ENCODE measurements at regions of chr9 and their contacts with region 1.

Region 1: DNA sequence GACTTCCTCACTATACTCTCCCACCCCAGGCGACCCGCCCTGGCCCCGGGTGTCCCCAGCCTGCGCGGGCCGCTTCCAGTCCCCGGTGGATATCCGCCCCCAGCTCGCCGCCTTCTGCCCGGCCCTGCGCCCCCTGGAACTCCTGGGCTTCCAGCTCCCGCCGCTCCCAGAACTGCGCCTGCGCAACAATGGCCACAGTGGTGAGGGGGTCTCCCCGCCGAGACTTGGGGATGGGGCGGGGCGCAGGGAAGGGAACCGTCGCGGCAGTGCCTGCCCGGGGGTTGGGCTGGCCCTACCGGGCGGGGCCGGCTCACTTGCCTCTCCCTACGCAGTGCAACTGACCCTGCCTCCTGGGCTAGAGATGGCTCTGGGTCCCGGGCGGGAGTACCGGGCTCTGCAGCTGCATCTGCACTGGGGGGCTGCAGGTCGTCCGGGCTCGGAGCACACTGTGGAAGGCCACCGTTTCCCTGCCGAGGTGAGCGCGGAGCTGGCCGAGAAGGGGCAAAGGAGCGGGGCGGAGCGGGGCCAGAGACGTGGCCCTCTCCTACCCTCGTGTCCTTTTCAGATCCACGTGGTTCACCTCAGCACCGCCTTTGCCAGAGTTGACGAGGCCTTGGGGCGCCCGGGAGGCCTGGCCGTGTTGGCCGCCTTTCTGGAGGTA is 2.1 kb downstream of the CA9 start:
- DNase-seq: peak; percentile 42
- H3K4me3 ChIP-seq: peak overlapping the region; percentile 34 to 43 (median 40)
- H3K27ac ChIP-seq: no peak overlapping the region
- H3K4me1 ChIP-seq: peaks cover 5% of the 10 kb centered on the region
- H3K27me3 ChIP-seq: peaks cover 3 to 11% of the 10 kb centered on the region in 2 experiments
- CTCF ChIP-seq: no peak
- POLR2A ChIP-seq: no peak

Region 2: GRCh38 chr9:35374436-35374835 is 301.4 kb before region 1 on chr9:
- CTCF ChIA-PET with region 1: no interaction called
- POLR2A ChIA-PET with region 1: no interaction called
- dilution Hi-C with region 1: no loop called
- intact Hi-C with region 1: no loop called
- DNase-seq: no peak
- H3K4me3 ChIP-seq: no peak overlapping the region
- H3K27ac ChIP-seq: no peak overlapping the region
- H3K4me1 ChIP-seq: no peaks in the 10 kb centered on the region
- H3K27me3 ChIP-seq: no peaks in the 10 kb centered on the region
- CTCF ChIP-seq: no peak
- POLR2A ChIP-seq: no peak

Region 3: GRCh38 chr9:35481347-35481975 is 194.4 kb before region 1 on chr9:
- CTCF ChIA-PET with region 1: no interaction called
- POLR2A ChIA-PET with region 1: no interaction called
- dilution Hi-C with region 1: no loop called
- intact Hi-C with region 1: no loop called
- DNase-seq: peak; percentile 71
- H3K4me3 ChIP-seq: no peak overlapping the region
- H3K27ac ChIP-seq: no peak overlapping the region
- H3K4me1 ChIP-seq: peaks cover 5% of the 10 kb centered on the region
- H3K27me3 ChIP-seq: no peaks in the 10 kb centered on the region
- CTCF ChIP-seq: peak; percentile 75 to 80
- POLR2A ChIP-seq: no peak

Region 4: DNA sequence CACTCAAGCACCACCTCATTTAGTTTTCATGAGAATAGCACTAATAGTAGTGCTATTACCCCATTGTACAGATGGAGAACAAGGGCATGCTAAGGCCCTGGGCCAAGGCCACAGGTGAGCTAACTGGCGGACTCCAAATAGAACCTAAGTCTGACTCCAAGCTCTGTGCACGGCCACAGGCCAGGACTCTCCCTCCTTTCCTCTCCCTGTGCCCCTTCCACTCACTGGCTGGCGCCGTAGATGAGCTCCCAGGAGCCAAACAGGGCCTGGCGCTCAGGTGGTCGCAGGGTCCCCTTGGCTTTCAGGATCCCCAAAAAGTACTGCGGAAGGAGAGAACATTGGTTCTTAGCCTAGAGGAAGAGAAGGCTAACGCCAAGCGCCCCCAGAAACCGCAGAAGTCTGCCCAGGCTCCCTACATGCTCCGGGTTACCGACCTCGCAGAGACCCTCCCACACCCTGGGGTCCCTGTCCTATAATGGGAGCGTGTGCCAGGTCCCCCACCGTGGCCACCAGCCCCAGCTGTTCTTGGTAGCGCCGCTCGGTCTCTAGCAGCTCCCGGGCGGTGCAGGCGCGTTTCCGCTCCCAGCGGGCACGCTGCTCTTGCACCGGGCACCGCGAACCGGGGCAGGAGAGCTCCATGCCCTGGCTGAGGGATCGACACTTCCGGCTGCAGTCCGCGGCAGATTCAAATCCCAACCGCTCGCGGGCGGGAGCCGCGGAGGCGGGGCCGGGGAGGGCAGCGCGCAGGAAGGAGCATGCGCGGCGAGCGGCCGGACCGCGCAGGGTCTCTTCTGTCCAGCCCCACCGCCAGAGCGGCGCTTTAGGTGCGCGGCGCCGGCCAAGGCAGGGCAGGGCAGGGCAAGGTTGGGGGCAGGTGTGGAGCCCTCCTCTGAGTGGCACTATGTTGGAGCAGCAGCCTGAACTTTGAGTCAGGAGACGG is 11.1 kb before region 1 on chr9 and contains the start of gene ARHGEF39:
- CTCF ChIA-PET with region 1: interaction called, 15 read pairs
- POLR2A ChIA-PET with region 1: no interaction called
- dilution Hi-C with region 1: no loop called
- intact Hi-C with region 1: no loop called
- DNase-seq: peak; percentile 81
- H3K4me3 ChIP-seq: peak within 1 kb of the TSS; percentile 31 to 67 (median 43)
- H3K27ac ChIP-seq: no peak within 1 kb of the TSS
- H3K4me1 ChIP-seq: peaks cover 18% of the 10 kb centered on the region
- H3K27me3 ChIP-seq: no peaks in the 10 kb centered on the region
- CTCF ChIP-seq: peak; percentile 21 to 40
- POLR2A ChIP-seq: peak; percentile 24
- total RNA-seq, gene ARHGEF39: 4.6 and 6.5 TPM in 2 replicates